Tibial artery (tissue), 4 donors: ENCODE measurements at regions of chr9 and their contacts with region 1.

Region 1: GRCh38 chr9:76441551-76442322 is 17.2 kb upstream of the GCNT1 start:
- DNase-seq: no peak
- H3K4me3 ChIP-seq: no peak overlapping the region
- H3K27ac ChIP-seq: no peak overlapping the region
- H3K4me1 ChIP-seq: no peaks in the 10 kb centered on the region
- H3K27me3 ChIP-seq: no peaks in the 10 kb centered on the region
- CTCF ChIP-seq: no peak

Region 2: GRCh38 chr9:76704593-76705204 is 263.0 kb after region 1 on chr9:
- intact Hi-C with region 1: loop called (anchors 10 kb)
- DNase-seq: no peak
- H3K4me3 ChIP-seq: no peak overlapping the region
- H3K27ac ChIP-seq: no peak overlapping the region
- H3K4me1 ChIP-seq: peaks cover 0 to 28% (median 7%) of the 10 kb centered on the region in 4 donors
- H3K27me3 ChIP-seq: no peaks in the 10 kb centered on the region
- CTCF ChIP-seq: peak; percentile 53 to 74

Region 3: DNA sequence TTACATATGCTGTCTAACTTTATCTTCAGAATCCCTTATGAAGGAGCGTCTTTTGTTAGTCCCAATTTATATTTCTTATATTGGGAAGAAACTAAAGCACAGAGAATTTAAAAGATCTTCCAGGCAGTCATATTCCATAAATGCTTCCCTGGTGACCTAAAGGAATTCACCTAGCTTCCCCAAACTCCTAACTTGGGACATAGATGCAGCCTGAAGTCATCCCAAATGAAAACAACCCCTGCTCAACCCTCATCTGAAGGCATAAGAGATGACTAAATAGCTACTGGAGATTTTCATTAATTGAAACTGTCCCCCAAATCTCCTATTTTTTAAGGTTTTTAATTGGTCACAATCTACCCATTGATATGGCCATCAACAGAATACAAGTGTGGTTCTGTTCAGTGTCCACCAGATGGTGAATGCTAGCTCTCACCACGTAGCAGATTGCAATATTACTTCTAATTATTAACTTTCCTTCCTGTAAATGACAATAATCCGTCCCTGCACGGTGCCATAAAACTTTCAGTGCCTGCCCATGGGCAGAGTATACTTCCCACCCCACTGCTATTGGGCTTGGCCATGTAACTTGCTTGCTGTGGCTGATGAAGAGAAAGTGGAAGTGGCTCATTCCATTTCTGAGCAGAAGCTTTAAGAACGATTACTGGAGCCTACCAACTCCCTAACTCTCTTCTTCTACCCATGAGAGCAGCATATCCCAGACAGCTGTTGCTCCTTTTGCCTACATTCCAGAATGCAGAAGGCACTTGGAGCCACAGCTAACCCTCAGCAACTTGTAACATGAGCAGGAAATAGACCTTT is 445.5 kb after region 1 on chr9:
- intact Hi-C with region 1: no loop called
- DNase-seq: no peak
- H3K4me3 ChIP-seq: no peak overlapping the region
- H3K27ac ChIP-seq: peak overlapping the region; percentile 41 to 53
- H3K4me1 ChIP-seq: peaks cover 0 to 91% (median 15%) of the 10 kb centered on the region in 4 donors
- H3K27me3 ChIP-seq: no peaks in the 10 kb centered on the region
- CTCF ChIP-seq: peak in 1 of 2 experiments; percentile 8

Region 4: GRCh38 chr9:77011973-77012821 is 570.5 kb after region 1 on chr9:
- intact Hi-C with region 1: loop called (anchors 10 kb)
- DNase-seq: peak in 1 of 2 donors; percentile 41
- H3K4me3 ChIP-seq: no peak overlapping the region
- H3K27ac ChIP-seq: no peak overlapping the region
- H3K4me1 ChIP-seq: peaks cover 0 to 41% (median 24%) of the 10 kb centered on the region in 4 donors
- H3K27me3 ChIP-seq: peaks cover 17 to 97% of the 10 kb centered on the region in 2 donors
- CTCF ChIP-seq: peak; percentile 58 to 64